Activated CD4-positive, alpha-beta T cell treated with anti-CD3 and anti-CD28 coated beads for 36 hours (primary cell): ENCODE measurements at regions of chr16 and their contacts with region 1.

Region 1: DNA sequence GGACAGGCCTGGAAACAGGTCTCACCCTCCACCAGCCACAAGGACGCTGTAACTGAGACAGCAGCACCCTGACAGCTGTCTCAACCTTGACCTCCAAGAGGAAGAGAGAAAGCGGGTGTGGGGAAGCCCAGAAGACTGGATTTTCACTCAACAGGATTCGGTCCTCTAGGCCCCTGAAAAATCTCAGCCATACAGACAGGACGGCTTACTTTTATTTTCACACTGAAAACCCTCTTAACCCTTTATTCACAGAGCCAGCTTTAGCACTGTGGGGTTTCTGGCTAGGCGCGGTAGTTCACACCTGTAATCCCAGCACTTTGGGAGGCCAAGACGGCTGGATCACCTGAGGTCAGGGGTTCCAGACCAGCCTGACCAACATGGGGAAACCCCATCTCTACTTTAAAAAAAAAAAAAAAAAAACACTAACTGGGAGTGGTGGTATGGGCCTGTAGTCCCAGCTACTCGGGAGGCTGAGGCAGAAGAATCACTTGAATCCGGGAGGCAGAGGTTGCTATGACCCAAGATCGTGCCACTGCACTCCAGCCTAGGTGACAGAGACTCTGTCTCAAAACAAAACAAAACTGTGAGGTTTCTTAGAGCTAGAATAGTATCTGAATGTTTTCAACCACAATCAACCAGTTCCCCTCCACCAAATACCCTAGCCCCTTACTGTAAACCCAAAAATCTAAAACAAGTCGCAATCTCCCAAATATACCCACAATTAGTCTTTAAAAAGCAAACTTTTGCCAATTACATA is 5.3 kb downstream of the ANKRD11 start:
- DNase-seq: peak; percentile 67
- ATAC-seq: peak; percentile 31
- H3K4me3 Mint-ChIP-seq: peak overlapping the region; percentile 48
- H3K27ac Mint-ChIP-seq: peak overlapping the region; percentile 93
- H3K4me1 Mint-ChIP-seq: peaks cover 80% of the 10 kb centered on the region
- H3K27me3 Mint-ChIP-seq: no peaks in the 10 kb centered on the region

Region 2: GRCh38 chr16:89325861-89326471 is 159.1 kb before region 1 on chr16:
- CTCF ChIA-PET with region 1: interaction called, 3 read pairs
- POLR2A ChIA-PET with region 1: interaction called, 4 read pairs
- intact Hi-C with region 1: loop called (anchors 2 to 5 kb)
- DNase-seq: no peak
- ATAC-seq: no peak
- H3K4me3 Mint-ChIP-seq: no peak overlapping the region
- H3K27ac Mint-ChIP-seq: peak overlapping the region; percentile 77
- H3K4me1 Mint-ChIP-seq: peaks cover 87% of the 10 kb centered on the region
- H3K27me3 Mint-ChIP-seq: no peaks in the 10 kb centered on the region

Region 3: DNA sequence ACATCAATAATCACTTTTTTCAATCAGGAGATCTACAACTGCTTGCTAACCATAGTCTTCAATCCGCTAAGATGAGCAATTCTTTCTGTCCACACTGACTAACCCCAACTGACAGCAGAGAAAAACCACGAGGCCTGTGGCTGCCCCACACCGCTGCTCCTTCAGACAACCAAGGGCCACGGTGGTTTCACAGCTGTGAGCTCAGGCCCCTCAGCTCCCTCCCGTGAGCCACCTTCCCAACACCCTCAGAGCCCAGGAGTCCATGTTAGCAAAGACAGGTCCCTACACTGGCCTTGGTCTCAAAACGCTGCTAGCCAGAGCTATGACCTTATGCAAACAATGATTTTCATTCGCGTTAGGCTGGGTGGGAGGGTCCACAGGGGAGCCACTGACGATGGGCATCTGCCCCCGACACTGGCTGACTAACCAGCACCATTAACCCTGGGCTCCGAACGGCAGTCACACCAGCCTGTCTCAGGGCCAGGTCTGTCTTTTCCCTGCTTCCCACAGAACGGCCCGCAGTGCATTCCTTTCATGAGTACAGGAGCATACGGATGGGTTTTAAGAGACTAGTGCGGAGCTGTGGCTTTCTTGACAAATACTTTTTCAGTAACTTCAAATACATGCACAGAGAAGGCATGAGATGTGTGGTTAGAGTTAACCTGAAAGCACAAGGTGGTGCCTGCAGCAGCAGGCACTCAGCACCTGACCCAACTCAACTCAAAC is 62.0 kb before region 1 on chr16:
- CTCF ChIA-PET with region 1: no interaction called
- POLR2A ChIA-PET with region 1: interaction called, 7 read pairs
- intact Hi-C with region 1: loop called (anchors 1 to 5 kb)
- DNase-seq: peak; percentile 80
- ATAC-seq: peak; percentile 80
- H3K4me3 Mint-ChIP-seq: peak overlapping the region; percentile 15
- H3K27ac Mint-ChIP-seq: peak overlapping the region; percentile 74
- H3K4me1 Mint-ChIP-seq: peaks cover 84% of the 10 kb centered on the region
- H3K27me3 Mint-ChIP-seq: no peaks in the 10 kb centered on the region

Region 4: GRCh38 chr16:89436366-89436765 is 48.7 kb before region 1 on chr16:
- CTCF ChIA-PET with region 1: no interaction called
- POLR2A ChIA-PET with region 1: no interaction called
- intact Hi-C with region 1: loop called (anchors 2 kb)
- DNase-seq: no peak
- ATAC-seq: no peak
- H3K4me3 Mint-ChIP-seq: no peak overlapping the region
- H3K27ac Mint-ChIP-seq: no peak overlapping the region
- H3K4me1 Mint-ChIP-seq: peaks cover 74% of the 10 kb centered on the region
- H3K27me3 Mint-ChIP-seq: no peaks in the 10 kb centered on the region

Region 5: DNA sequence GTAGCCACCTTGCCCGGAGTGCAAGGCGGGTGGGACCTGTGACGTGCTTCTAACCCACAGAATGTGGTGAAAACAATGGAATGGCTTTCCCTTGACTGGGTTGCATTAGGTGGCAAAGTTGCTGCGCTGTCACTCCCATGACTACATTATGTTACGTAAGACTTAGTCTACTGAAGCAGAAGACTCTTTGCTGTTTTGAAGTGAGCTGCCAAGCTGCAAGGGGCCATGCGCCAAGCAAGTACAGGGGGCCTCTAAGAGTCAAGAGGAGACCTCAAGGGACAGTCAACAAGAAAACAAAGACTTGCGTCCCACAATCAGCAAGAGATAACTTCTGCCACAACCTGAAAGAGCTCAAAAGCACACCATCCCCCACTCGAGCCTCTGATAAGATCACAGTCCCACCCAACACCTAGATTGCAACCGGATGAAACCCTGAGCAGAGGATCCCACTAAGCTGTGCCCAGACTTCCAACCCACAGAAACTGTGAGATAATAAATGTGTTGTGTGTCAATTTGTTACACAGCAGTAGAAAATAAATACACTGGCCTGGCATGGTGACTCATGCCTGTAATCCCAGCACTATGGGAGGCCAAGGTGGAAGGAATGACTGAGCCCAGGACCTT is 11.2 kb before region 1 on chr16:
- CTCF ChIA-PET with region 1: interaction called, 4 read pairs
- POLR2A ChIA-PET with region 1: interaction called, 4 read pairs
- intact Hi-C with region 1: loop called in 1 of 2 experiments (anchors 2 kb)
- DNase-seq: no peak
- ATAC-seq: no peak
- H3K4me3 Mint-ChIP-seq: no peak overlapping the region
- H3K27ac Mint-ChIP-seq: no peak overlapping the region
- H3K4me1 Mint-ChIP-seq: peaks cover 90% of the 10 kb centered on the region
- H3K27me3 Mint-ChIP-seq: no peaks in the 10 kb centered on the region

Region 6: DNA sequence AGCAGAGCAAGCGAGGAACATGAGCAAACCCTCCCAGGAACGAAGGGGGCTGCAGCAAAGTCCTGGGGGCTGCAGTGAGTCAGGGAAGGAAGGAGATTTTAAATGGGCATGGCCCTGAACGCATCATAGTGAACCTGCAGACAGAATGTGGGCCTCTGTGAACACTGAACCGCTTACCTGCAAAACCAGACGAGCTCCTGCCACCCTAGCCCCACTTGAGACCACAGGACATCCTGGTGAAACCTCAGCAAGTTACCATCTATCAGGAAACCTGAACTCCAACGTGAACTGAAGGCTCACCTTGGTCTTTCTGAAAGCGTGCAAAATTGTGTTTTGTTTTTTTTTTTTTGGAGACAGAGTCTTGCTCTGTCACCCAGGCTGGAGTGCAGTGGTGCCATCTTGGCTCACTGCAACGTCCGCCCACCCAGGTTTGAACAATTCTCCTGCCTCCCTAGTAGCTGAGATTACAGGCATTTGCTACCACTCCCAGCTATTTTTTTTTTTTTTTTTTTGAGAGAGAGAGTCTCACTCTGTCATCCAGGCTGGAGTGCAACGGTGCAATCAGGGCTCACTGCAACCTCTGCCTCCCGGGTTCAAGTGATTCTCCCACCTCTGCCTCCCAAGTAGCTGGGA is 300.5 kb after region 1 on chr16:
- CTCF ChIA-PET with region 1: no interaction called
- POLR2A ChIA-PET with region 1: no interaction called
- intact Hi-C with region 1: no loop called
- DNase-seq: no peak
- ATAC-seq: no peak
- H3K4me3 Mint-ChIP-seq: no peak overlapping the region
- H3K27ac Mint-ChIP-seq: no peak overlapping the region
- H3K4me1 Mint-ChIP-seq: peaks cover 23% of the 10 kb centered on the region
- H3K27me3 Mint-ChIP-seq: no peaks in the 10 kb centered on the region